Esophagus muscularis mucosa (tissue), 4 donors: ENCODE measurements at regions of chr19 and their contacts with region 1.

Region 1: DNA sequence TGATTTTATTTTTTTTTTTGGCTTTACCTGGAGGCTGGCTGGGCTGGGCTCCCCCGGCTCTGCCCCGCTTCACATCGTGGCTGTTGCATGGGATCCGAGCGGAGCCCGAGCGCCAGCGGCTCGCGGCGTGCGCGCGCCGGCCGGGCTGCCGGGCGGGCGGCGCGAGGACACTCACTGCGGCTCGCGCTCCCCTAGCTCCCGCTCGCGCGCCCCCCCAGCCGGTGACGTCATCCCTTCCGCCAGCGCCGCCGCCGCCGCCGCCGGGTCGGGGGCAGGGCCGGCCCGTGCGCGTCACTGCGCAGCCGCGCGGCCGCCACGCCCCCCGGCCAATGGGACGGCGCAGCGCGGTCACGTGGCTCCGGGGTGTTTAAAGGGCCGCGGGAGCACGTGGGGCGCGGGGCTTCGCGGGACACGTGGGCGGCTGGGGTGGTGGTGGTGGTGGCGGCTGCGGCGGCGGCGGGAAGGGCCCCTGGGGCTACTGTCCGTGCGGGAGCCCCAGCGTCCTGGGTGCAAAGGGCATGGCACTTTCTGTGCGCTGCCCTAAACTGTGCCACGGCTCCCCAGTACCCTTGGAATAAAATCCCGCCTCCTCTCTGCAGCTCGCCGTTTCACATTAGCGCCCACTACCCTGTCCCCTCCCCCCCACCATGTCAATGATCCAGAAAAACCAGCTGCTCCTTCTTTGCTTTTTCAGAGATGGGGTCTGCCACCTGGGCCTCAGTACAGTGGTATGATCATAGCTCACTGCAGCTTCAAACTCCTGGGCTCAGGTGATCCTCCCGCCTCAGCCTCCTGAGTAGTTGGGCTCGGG is at the start of gene PTPRS:
- DNase-seq: no peak
- H3K4me3 ChIP-seq: peak within 1 kb of the TSS; percentile 60 to 78 (median 66)
- H3K27ac ChIP-seq: peak within 1 kb of the TSS; percentile 13 to 63 (median 40)
- H3K4me1 ChIP-seq: peaks cover 12 to 28% (median 25%) of the 10 kb centered on the region in 4 donors
- H3K27me3 ChIP-seq: peaks cover 0 to 50% (median 29%) of the 10 kb centered on the region in 4 donors
- CTCF ChIP-seq: no peak
- EP300 ChIP-seq: no peak
- POLR2A ChIP-seq: no peak
- total RNA-seq, gene PTPRS: 140 to 311 (median 224) TPM

Region 2: GRCh38 chr19:5292822-5293611 is 47.8 kb before region 1 on chr19:
- intact Hi-C with region 1: loop called (anchors 2 kb)
- DNase-seq: no peak
- H3K4me3 ChIP-seq: peak overlapping the region; percentile 78 to 93 (median 90)
- H3K27ac ChIP-seq: peak overlapping the region; percentile 88 to 94 (median 90)
- H3K4me1 ChIP-seq: peaks cover 12 to 64% (median 62%) of the 10 kb centered on the region in 4 donors
- H3K27me3 ChIP-seq: peaks cover 0 to 3% (median 0%) of the 10 kb centered on the region in 4 donors
- CTCF ChIP-seq: no peak
- EP300 ChIP-seq: no peak
- POLR2A ChIP-seq: peak; percentile 34

Region 3: DNA sequence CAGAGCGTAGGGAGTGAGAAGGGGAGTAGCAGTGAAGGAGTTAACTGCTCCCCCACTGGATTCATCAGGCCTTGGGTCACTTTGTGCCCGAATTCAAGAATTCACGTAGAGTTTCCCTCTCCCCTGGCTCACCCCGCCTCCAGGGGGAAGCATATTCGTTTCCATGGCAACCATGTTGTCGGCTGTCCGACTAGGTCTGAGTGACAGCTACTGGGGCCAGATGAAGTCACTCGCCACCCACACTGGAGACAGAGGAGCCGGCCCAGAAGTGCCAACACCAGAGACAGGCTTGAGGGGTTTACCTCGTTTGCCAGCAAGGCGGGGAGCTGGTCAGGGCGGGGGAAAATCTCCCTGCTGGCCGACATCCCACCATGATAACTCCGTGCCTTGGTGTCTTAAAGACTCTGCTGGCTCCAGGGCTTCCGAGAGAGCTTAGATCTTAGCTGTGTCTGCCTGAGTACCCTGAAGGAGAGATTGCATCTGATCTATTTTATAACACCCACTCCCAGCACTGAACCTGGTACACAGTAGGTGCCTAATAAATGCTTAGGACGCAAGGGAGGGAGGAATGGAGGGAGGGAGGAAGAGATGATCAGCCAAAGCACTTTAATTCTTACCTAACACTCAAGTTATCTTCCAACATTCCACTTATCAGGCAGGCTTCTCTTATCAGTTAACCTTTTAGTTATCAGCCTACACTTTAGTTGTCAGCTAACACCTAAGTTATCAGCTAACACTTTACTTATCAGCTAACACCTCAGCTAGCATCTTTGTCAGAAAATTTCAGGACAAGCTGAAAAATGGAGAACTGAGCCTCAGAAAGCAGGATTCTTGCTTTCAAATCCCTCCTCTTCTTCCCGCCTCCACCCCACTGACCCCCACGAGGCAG is 57.2 kb after region 1 on chr19:
- intact Hi-C with region 1: no loop called
- DNase-seq: no peak
- H3K4me3 ChIP-seq: no peak overlapping the region
- H3K27ac ChIP-seq: no peak overlapping the region
- H3K4me1 ChIP-seq: peaks cover 0 to 3% (median 0%) of the 10 kb centered on the region in 4 donors
- H3K27me3 ChIP-seq: peaks cover 3 to 78% (median 32%) of the 10 kb centered on the region in 4 donors
- CTCF ChIP-seq: no peak
- EP300 ChIP-seq: no peak
- POLR2A ChIP-seq: no peak

Region 4: DNA sequence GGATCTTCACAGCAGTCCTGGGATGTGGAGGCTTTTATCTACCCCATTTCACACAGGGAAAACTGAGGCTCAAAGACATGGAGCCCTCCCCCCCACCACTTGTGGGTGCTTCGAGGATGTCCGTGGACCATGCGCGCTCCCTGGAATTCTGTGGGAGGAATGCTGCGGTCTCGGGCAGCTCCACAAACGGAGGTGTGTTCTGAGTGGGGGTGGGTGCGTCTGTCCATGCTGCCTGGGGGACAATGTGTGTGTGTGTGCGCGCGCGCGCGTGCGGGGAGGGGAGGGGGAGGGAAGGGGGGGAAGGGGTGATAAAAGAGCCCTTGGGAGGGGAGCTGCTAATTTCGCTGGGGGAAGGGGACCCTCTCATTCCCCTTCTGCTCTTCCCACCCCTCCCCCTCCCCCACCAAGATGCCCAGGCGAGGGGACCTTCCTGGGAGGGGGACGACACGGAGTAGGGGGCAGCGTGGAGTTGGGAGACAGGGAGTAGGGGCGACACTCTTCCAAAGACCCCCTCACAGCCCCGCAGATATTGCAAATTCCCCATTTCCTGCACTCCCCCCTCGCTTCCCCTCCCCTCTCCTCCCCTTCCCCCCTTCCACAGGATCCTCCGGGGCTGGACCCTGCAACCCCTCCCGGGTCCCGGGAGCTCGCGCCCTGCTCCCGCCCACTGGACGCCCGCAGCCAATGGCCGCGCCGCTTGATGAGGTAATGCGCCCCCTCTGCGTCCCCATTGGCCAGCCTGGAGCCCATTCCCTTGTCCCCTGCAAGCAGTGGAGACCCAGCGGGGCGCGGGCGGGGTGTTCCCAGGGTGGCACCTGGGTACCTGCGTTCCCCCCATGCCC is 95.5 kb after region 1 on chr19:
- intact Hi-C with region 1: no loop called
- DNase-seq: no peak
- H3K4me3 ChIP-seq: no peak overlapping the region
- H3K27ac ChIP-seq: no peak overlapping the region
- H3K4me1 ChIP-seq: peaks cover 0 to 10% (median 3%) of the 10 kb centered on the region in 4 donors
- H3K27me3 ChIP-seq: peaks cover 0 to 64% (median 13%) of the 10 kb centered on the region in 4 donors
- CTCF ChIP-seq: no peak
- EP300 ChIP-seq: no peak
- POLR2A ChIP-seq: no peak